ENCODE measurements at regions of chr1 and their contacts with region 1.

Region 1: GRCh38 chr1:245645894-245646293 is 491.1 kb downstream of the KIF26B start:
- DNase-seq: no peak
- H3K4me3 ChIP-seq: no peak overlapping the region
- H3K27ac ChIP-seq: no peak overlapping the region
- H3K4me1 ChIP-seq: no peaks in the 10 kb centered on the region
- H3K27me3 ChIP-seq: no peaks in the 10 kb centered on the region
- CTCF ChIP-seq: no peak
- POLR2A ChIP-seq: no peak

Region 2: DNA sequence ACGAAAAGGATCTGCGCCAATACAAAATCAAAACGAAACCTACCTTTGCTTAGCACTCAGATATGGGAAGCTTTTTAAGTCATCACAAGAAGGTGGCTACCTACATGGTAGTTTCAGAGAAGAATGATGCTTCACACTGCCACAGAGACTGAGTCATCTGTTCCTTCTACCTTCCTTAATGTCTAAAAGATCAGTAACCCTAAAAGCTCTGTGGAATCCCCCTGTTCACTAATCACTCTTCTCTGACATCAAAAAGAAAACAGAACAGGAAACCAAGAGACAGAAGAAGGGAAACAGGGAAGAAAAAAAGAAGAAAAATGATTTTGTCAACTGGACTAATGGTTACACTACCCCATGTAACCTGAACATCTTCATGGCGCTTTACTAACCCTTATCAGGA is 684.0 kb after region 1 on chr1:
- intact Hi-C with region 1: loop called (anchors 10 kb)
- DNase-seq: no peak
- H3K4me3 ChIP-seq: no peak overlapping the region
- H3K27ac ChIP-seq: no peak overlapping the region
- H3K4me1 ChIP-seq: no peaks in the 10 kb centered on the region
- H3K27me3 ChIP-seq: no peaks in the 10 kb centered on the region
- CTCF ChIP-seq: no peak
- POLR2A ChIP-seq: no peak